BJ (cell line): ENCODE measurements at regions of chr3 and their contacts with region 1.

Region 1: DNA sequence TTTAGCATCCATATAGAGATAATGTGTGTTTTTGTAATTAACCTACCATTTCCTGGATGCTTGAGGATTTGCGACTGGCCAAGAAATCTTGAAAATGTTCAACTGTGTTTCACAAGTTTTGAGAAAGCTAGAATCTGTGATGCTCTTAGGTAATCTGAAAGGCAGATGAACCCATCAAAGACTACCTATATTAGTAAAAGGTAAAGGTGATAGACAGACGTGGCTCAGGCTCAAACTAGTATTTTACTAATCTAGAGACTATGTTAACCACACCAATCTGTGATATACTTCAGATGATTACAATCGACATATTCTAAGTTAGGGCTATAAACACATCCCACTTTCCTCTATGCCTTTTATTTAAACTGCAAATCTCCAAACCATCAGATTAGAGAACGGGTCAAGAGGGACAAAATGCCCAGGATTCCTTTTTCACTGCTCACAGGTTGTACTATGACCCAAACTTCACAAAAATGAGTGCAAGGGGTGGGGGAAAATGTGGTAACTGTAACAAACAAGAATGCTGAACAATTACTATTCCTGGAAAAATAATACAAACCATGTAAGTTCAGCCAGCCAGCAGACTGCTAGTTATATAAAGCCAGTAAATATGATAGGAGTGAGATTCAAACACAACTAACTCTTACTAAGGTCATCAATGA is 295.1 kb downstream of the FOXP1 start:
- DNase-seq: no peak
- H3K4me3 ChIP-seq: no peak overlapping the region
- H3K27me3 ChIP-seq: no peaks in the 10 kb centered on the region
- CTCF ChIP-seq: no peak

Region 2: DNA sequence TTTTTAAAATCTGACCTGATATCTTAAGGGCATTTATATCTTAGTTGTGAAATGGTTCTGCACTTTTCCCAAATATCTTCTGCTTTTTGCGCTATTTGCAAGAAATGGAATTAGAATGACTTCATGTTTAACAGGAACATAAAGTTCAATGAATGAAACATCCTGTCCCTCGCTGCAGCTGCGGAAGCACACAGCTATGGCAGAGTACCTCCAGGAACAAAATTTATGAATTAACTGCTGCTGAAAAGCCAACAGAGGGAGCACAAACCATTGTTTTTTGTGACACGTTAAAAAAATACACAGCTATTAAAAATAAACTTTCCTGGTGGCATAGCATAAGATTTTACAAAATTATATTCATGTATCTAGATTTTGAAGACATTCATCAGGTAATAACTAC is 571.6 kb before region 1 on chr3:
- CTCF ChIA-PET with region 1: no interaction called
- POLR2A ChIA-PET with region 1: no interaction called
- DNase-seq: no peak
- H3K4me3 ChIP-seq: no peak overlapping the region
- H3K27me3 ChIP-seq: no peaks in the 10 kb centered on the region
- CTCF ChIP-seq: peak; percentile 47

Region 3: GRCh38 chr3:71067977-71068635 is 220.3 kb before region 1 on chr3:
- CTCF ChIA-PET with region 1: no interaction called
- POLR2A ChIA-PET with region 1: interaction called, 13 read pairs
- DNase-seq: no peak
- H3K4me3 ChIP-seq: no peak overlapping the region
- H3K27me3 ChIP-seq: no peaks in the 10 kb centered on the region
- CTCF ChIP-seq: no peak